ENCODE measurements at regions of chr16 and their contacts with region 1.

Region 1: GRCh38 chr16:57300387-57301125 is 16.1 kb upstream of the PLLP start:
- DNase-seq: peak; percentile 97
- ATAC-seq: peak; percentile 89
- H3K4me3 ChIP-seq: peak overlapping the region; percentile 64; the same call in 1 of the 2 replicates
- H3K27ac ChIP-seq: no peak overlapping the region
- H3K4me1 ChIP-seq: peaks cover 3% of the 10 kb centered on the region; the same call in 1 of the 2 replicates
- H3K27me3 ChIP-seq: peaks cover 12% of the 10 kb centered on the region
- CTCF ChIP-seq: peak; percentile 99
- POLR2A ChIP-seq: peak; percentile 49; the same call in 1 of the 2 replicates
- RAD21 ChIP-seq: peak; percentile 100

Region 2: DNA sequence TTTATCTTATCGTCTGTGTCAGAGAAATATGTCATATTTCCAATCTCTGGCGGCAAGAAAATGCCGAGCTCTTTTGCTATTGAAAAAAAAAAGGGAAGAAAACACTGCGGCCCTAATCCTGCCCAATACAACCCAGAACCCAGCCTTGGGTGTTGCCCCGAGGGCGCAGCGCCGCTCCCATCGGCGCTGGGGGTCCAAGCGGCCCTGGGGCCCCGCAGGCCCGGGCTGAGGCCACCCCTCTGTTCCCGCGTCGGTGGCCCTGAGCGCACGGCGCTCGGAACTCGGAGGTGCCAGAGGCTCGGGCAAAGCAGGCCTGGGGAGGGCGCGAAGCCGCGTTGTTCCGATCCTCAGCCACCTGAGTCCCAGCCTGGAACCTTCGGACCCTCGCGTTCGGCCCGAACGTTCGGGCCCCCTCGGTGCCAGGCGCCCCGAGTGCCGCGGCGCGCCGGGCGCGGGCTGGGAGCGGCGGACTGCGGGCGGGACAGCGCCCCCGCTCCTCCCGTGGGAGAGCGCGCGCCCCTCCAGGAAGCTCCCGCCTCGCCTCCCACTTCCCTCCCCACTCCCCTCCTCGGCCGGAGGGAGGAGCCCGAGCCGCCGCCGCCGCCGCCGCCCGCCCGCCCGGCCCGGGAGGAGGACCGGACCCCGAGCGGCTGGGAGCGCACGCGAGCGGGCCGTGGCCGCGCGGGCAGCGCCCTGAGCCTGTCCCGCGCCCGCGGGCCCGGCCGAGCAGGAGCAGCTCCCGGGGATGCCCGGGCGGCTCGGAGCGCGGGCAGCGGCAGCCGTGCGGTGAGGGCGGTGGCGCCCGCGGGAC is 208.4 kb before region 1 on chr16 and contains the start of gene CPNE2:
- CTCF ChIA-PET with region 1: no interaction called
- POLR2A ChIA-PET with region 1: no interaction called
- dilution Hi-C with region 1: no loop called
- in situ Hi-C with region 1: loop called (anchors 10 kb)
- intact Hi-C with region 1: loop called (anchors 2 kb)
- DNase-seq: peak; percentile 34
- ATAC-seq: peak; percentile 93
- H3K4me3 ChIP-seq: peak within 1 kb of the TSS; percentile 96
- H3K27ac ChIP-seq: peak within 1 kb of the TSS; percentile 52; the same call in 1 of the 2 replicates
- H3K4me1 ChIP-seq: peaks cover 4% of the 10 kb centered on the region; the same call in 1 of the 2 replicates
- H3K27me3 ChIP-seq: peaks cover 9% of the 10 kb centered on the region; the same call in 1 of the 2 replicates
- CTCF ChIP-seq: 0 out of 2 replicates have a peak, but pooled peaks have one; percentile 15
- POLR2A ChIP-seq: no peak
- RAD21 ChIP-seq: no peak; the same call in 1 of the 2 replicates
- total RNA-seq, gene CPNE2: 9.2 and 15.4 TPM in 2 replicates

Region 3: GRCh38 chr16:57194512-57194911 is 106.0 kb before region 1 on chr16:
- CTCF ChIA-PET with region 1: interaction called, 3 read pairs
- POLR2A ChIA-PET with region 1: no interaction called
- dilution Hi-C with region 1: no loop called
- in situ Hi-C with region 1: no loop called
- intact Hi-C with region 1: loop called (anchors 2 kb)
- DNase-seq: peak; percentile 94
- ATAC-seq: peak; percentile 92
- H3K4me3 ChIP-seq: no peak overlapping the region
- H3K27ac ChIP-seq: peak overlapping the region; percentile 71; the same call in 1 of the 2 replicates
- H3K4me1 ChIP-seq: peaks cover 23% of the 10 kb centered on the region
- H3K27me3 ChIP-seq: no peaks in the 10 kb centered on the region
- CTCF ChIP-seq: no peak
- POLR2A ChIP-seq: 0 out of 2 replicates have a peak, but pooled peaks have one; percentile 24
- RAD21 ChIP-seq: no peak

Region 4: GRCh38 chr16:57235128-57236021 is 65.2 kb before region 1 on chr16:
- CTCF ChIA-PET with region 1: no interaction called
- POLR2A ChIA-PET with region 1: no interaction called
- dilution Hi-C with region 1: no loop called
- in situ Hi-C with region 1: no loop called
- intact Hi-C with region 1: no loop called
- DNase-seq: peak; percentile 87
- ATAC-seq: peak; percentile 95
- H3K4me3 ChIP-seq: no peak overlapping the region
- H3K27ac ChIP-seq: no peak overlapping the region
- H3K4me1 ChIP-seq: peaks cover 8% of the 10 kb centered on the region
- H3K27me3 ChIP-seq: no peaks in the 10 kb centered on the region
- CTCF ChIP-seq: no peak
- POLR2A ChIP-seq: no peak
- RAD21 ChIP-seq: no peak

Region 5: DNA sequence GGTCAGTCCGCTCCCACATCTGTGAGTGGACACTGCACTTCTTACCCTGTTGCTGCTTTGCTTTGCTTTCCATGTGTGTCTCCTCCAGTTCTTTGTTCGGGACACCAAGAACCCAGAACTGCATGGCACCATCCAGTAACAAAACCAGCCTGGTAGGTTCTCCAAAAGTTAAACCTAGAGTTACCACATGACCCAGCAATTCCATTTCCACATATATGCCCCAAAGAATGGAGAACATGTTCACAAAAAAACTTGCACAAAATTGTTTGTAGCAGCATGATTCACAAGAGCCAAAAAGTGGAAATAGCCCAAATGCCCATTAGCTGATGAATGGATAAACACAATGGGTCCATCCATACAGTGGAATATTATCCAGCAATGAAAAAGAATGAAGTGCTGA is 47.8 kb after region 1 on chr16:
- CTCF ChIA-PET with region 1: interaction called, 13 read pairs
- POLR2A ChIA-PET with region 1: no interaction called
- dilution Hi-C with region 1: no loop called
- in situ Hi-C with region 1: no loop called
- intact Hi-C with region 1: no loop called
- DNase-seq: no peak
- ATAC-seq: no peak
- H3K4me3 ChIP-seq: no peak overlapping the region
- H3K27ac ChIP-seq: no peak overlapping the region
- H3K4me1 ChIP-seq: no peaks in the 10 kb centered on the region
- H3K27me3 ChIP-seq: peaks cover 50% of the 10 kb centered on the region
- CTCF ChIP-seq: no peak
- POLR2A ChIP-seq: no peak
- RAD21 ChIP-seq: no peak

Region 6: DNA sequence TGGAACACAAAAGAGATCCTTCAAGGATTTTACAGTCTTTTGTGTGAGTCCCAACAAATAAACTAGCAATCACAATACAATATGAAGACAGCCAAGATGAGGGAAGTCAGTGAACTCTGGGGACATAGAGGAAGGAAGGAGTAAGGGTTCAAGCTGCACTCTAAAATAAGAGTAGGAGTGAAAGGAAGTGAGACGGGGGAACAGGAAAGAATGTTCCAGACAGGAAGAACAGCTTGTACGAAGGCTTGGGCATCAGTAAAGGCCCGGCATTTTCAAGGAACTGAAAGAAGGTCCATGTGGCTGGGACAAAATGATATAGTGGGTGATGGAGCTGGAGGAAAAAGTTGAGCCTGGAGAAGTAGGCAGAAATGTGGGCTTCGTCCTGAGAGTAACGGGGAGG is 108.5 kb after region 1 on chr16:
- CTCF ChIA-PET with region 1: no interaction called
- POLR2A ChIA-PET with region 1: no interaction called
- dilution Hi-C with region 1: no loop called
- in situ Hi-C with region 1: no loop called
- intact Hi-C with region 1: no loop called
- DNase-seq: no peak
- ATAC-seq: no peak
- H3K4me3 ChIP-seq: no peak overlapping the region
- H3K27ac ChIP-seq: no peak overlapping the region
- H3K4me1 ChIP-seq: no peaks in the 10 kb centered on the region
- H3K27me3 ChIP-seq: peaks cover 66% of the 10 kb centered on the region
- CTCF ChIP-seq: no peak
- POLR2A ChIP-seq: no peak
- RAD21 ChIP-seq: no peak

Region 7: GRCh38 chr16:57422026-57422944 is 121.7 kb after region 1 on chr16:
- CTCF ChIA-PET with region 1: interaction called, 30 read pairs
- POLR2A ChIA-PET with region 1: interaction called, 4 read pairs
- dilution Hi-C with region 1: no loop called
- in situ Hi-C with region 1: loop called (anchors 5 kb)
- intact Hi-C with region 1: loop called (anchors 1 kb)
- DNase-seq: peak; percentile 72
- ATAC-seq: peak; percentile 91
- H3K4me3 ChIP-seq: no peak overlapping the region
- H3K27ac ChIP-seq: no peak overlapping the region
- H3K4me1 ChIP-seq: peaks cover 2% of the 10 kb centered on the region
- H3K27me3 ChIP-seq: no peaks in the 10 kb centered on the region
- CTCF ChIP-seq: peak; percentile 83
- POLR2A ChIP-seq: no peak
- RAD21 ChIP-seq: peak; percentile 83

Region 8: GRCh38 chr16:57810197-57811031 is 509.9 kb after region 1 on chr16:
- CTCF ChIA-PET with region 1: no interaction called
- POLR2A ChIA-PET with region 1: no interaction called
- dilution Hi-C with region 1: no loop called
- in situ Hi-C with region 1: no loop called
- intact Hi-C with region 1: no loop called
- DNase-seq: peak; percentile 68
- ATAC-seq: peak; percentile 48
- H3K4me3 ChIP-seq: no peak overlapping the region
- H3K27ac ChIP-seq: no peak overlapping the region; the same call in 1 of the 2 replicates
- H3K4me1 ChIP-seq: peaks cover 15% of the 10 kb centered on the region
- H3K27me3 ChIP-seq: no peaks in the 10 kb centered on the region
- CTCF ChIP-seq: no peak
- POLR2A ChIP-seq: no peak
- RAD21 ChIP-seq: no peak